Activated CD4-positive, alpha-beta T cell treated with anti-CD3 and anti-CD28 coated beads, Interleukin-2, amount 10 ng/mL, durations not matched to agents 24 days and 14 days (primary cell): ENCODE measurements at regions of chr2 and their contacts with region 1.

Region 1: GRCh38 chr2:120174963-120175581 is 48.1 kb downstream of the TMEM185B start:
- DNase-seq: peak; percentile 82
- H3K4me3 Mint-ChIP-seq: no peak overlapping the region
- H3K27ac Mint-ChIP-seq: peak overlapping the region; percentile 18
- H3K4me1 Mint-ChIP-seq: peaks cover 36% of the 10 kb centered on the region
- H3K27me3 Mint-ChIP-seq: no peaks in the 10 kb centered on the region

Region 2: GRCh38 chr2:119641562-119642258 is 533.4 kb before region 1 on chr2:
- intact Hi-C with region 1: loop called (anchors 2 kb)
- DNase-seq: peak; percentile 92
- H3K4me3 Mint-ChIP-seq: no peak overlapping the region
- H3K27ac Mint-ChIP-seq: no peak overlapping the region
- H3K4me1 Mint-ChIP-seq: peaks cover 2% of the 10 kb centered on the region
- H3K27me3 Mint-ChIP-seq: peaks cover 12% of the 10 kb centered on the region

Region 3: DNA sequence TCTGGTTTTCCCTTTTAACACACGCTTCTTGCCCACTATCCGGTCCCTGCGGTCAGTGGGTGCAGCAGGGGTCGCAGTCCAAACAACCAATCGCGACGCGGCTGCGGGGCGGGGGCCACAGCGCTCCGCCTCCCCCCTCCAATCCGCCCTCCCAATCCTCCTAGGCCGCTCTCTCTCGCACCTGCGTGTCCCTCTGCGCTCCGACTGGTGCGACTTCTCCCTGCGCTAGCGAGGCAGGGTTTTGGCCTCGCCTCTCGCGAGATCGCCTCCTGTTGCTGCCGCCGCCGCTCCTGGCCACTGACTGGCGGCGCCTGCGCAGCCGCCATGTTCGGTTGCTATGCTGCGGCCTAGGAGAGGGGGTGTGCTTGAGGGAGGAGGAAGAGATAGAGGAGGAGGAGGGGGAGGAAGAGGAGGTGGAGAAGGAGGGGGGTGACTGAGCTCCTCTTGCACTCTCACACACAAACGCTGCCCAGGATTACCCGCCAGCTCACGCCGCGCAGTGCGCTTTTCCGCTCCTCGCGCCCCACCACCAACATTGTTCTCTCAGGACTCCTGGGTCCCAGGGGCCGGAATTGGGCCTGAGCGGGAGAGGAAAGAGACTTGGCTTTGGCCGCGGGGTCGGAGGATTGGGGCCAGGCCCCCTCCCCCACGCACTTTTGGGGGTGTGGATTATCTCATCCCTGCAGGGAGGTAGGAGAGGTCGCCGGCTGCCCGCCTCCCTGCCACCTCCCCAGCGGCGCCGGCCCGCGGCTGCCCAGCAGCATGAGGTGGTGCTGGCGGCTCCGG is 415.4 kb before region 1 on chr2 and contains the start of gene PTPN4:
- intact Hi-C with region 1: loop called (anchors 1 kb)
- DNase-seq: peak; percentile 98
- H3K4me3 Mint-ChIP-seq: peak within 1 kb of the TSS; percentile 92
- H3K27ac Mint-ChIP-seq: peak within 1 kb of the TSS; percentile 93
- H3K4me1 Mint-ChIP-seq: peaks cover 36% of the 10 kb centered on the region
- H3K27me3 Mint-ChIP-seq: no peaks in the 10 kb centered on the region
- total RNA-seq, gene PTPN4: 21.9 and 22.0 TPM in 2 replicates

Region 4: DNA sequence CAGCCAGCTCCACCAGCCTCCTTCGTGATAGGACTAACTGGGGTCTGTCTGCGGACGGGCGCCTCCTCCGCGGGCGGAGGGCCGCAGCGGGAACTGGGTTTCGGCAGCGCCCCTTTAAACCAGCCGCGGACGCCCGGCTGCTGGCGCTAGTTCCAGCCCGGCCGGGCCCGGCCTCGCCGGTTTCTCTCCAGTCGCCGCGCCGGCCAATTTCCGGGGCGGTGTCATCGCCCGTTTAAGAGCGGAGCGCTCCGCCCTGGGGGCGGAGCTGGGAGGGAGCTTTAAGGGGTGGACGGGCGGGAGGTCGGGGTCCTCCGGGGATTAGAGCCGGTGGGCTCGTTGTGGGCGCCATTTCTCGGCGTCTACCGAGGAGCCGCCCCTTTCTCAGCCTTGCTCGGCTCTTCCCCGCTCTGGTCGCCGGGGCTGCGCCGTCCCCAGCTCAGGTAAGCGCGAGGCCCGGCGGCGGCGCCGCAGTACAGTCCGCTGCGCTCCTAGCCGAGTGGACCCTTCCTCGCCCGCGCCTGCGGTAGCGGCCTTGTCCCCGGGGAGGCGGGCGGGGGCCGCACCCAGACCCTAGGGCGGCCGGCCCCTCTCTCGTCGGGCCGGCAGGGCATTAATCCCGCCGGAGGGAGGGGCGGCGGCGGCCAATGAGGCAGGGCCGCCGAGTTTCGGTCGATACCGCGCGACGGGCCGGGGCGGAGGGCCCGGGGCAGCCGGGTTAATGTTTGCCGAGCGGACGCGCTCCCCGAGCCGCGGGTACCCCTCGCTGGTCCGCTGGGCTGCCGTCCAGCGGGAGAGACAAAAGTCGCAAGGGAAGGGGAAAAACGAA is 162.1 kb before region 1 on chr2 and contains the start of gene EPB41L5:
- intact Hi-C with region 1: loop called (anchors 2 kb)
- DNase-seq: peak; percentile 94
- H3K4me3 Mint-ChIP-seq: peak within 1 kb of the TSS; percentile 75
- H3K27ac Mint-ChIP-seq: no peak within 1 kb of the TSS
- H3K4me1 Mint-ChIP-seq: peaks cover 11% of the 10 kb centered on the region
- H3K27me3 Mint-ChIP-seq: peaks cover 13% of the 10 kb centered on the region
- total RNA-seq, gene EPB41L5: 1.5 and 2.2 TPM in 2 replicates

Region 5: DNA sequence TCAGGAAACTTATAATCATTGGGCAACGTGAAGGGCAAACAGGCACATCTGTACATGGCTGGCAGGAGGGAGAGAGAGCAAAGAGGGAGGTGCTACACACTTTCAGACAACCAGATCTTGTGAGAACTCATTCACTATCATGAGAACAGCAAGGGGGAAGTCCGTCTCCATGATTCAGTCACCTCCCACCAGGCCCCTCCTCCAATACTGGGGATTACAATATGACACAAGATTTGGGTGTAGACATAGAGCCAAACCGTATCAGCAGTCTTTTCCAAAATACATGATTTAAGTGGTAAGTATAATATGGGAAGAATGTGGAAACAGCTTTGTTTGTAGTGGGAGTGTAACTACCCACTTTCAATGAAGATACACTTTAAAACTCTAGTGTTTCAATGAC is 97.2 kb before region 1 on chr2:
- intact Hi-C with region 1: no loop called
- DNase-seq: no peak
- H3K4me3 Mint-ChIP-seq: no peak overlapping the region
- H3K27ac Mint-ChIP-seq: no peak overlapping the region
- H3K4me1 Mint-ChIP-seq: no peaks in the 10 kb centered on the region
- H3K27me3 Mint-ChIP-seq: no peaks in the 10 kb centered on the region

Region 6: DNA sequence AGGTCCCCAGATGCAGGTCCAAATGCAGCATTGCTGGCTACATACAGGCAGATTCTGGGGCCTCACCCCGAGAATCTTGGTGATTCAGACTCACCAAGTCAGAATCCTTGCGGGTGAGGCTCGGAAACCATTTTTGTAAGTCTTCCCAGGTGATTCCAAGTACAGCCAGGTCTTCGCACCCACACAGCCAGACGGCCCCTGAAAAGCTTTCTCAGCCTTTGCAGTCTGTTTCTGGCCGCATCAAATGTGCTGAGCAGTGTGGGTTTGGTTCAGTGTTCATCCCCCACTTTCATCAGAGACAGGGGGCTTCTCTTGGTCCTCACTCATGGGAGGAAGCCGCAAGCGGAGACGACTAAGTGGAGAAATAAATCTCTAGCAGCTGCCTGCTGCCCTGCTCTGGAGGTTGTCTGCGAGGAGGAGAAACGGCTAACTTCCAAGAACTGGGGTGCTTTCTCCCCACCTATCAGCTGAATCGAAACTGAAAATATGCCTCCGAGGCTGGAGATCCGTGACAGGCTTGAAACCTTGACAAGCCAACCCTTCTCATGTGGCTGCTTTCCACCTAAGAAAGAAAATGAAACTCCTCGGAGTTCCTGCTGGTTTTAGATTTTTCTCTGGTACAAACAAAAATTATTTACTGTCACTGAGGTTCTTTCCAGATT is 57.0 kb after region 1 on chr2:
- intact Hi-C with region 1: loop called (anchors 1 kb)
- DNase-seq: peak; percentile 95
- H3K4me3 Mint-ChIP-seq: peak overlapping the region; percentile 98
- H3K27ac Mint-ChIP-seq: peak overlapping the region; percentile 99
- H3K4me1 Mint-ChIP-seq: peaks cover 61% of the 10 kb centered on the region
- H3K27me3 Mint-ChIP-seq: no peaks in the 10 kb centered on the region